HCT116 (cell line): ENCODE measurements at regions of chr16 and their contacts with region 1.

Region 1: DNA sequence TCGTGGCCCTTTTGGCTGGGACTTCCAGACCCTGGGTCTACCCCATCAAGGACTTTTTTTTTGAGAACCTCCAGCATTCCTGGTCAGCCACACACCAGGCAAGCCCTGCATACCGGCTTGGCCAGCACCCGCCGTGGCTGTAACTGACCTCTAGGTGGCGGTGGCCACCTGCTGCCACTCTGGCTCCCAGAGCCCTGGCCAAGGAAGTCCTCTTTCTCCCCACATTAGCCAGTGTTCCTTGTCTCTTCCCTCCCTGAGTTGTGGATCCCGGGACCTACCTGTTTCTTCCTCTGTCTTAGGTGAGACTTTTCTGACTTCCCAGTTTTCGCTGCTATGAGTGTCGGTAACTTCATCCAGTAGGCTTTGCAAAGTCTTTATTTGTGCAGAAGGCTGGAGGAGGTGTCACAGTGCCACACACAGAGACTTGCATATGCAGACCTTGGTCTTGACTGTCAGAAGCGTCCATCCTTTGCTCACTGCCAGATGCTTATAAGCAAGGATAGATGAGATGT is 348.3 kb downstream of the CPPED1 start:
- DNase-seq: peak; percentile 6
- ATAC-seq: peak; percentile 99
- H3K4me3 ChIP-seq: no peak overlapping the region
- H3K27ac ChIP-seq: no peak overlapping the region
- H3K4me1 ChIP-seq: no peaks in the 10 kb centered on the region
- H3K27me3 ChIP-seq: no peaks in the 10 kb centered on the region
- CTCF ChIP-seq: peak; percentile 65 to 93 (median 87); a peak in 5 of 6 replicates
- POLR2A ChIP-seq: no peak
- RAD21 ChIP-seq: peak; percentile 85

Region 2: DNA sequence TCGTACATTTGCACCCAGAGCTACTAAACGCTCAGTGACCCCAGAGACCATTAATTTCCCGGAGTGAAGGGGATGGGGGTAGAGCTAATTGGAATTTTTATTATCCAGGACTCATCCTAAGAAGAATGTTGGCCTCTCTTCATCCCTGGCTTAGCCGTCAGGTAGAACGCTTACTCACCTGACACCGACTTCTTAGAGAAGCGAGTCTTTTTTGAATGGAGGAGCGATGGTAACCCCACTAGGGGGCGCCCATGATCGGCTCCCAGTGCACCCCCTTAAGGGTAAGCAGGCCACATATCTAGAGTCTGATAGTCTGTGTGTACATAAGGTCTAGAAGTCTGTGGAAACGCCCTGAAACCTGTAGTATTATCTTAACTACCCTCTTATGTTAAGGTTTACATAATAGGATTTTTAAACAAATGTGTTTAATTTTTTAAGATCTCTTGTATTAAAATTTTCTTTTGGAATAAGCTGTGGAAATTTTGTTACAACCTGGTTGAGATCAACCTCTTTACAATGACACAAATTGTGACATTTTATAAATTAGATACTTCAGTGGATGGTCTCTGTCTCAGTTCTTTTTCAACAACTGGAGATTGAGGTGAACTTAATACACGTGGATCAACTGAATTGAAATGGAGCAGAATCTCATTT is 118.5 kb after region 1 on chr16:
- CTCF ChIA-PET with region 1: no interaction called
- POLR2A ChIA-PET with region 1: no interaction called
- RAD21 ChIA-PET with region 1: no interaction called
- intact Hi-C with region 1: loop called (anchors 5 kb)
- DNase-seq: peak; percentile 52
- ATAC-seq: peak; percentile 94
- H3K4me3 ChIP-seq: no peak overlapping the region
- H3K27ac ChIP-seq: no peak overlapping the region
- H3K4me1 ChIP-seq: 0 out of 4 replicates have a peak, but pooled peaks cover 0 to 3% of the 10 kb centered on the region in 2 experiments
- H3K27me3 ChIP-seq: no peaks in the 10 kb centered on the region
- CTCF ChIP-seq: peak; percentile 81 to 93 (median 88)
- POLR2A ChIP-seq: no peak
- RAD21 ChIP-seq: peak; percentile 94

Region 3: DNA sequence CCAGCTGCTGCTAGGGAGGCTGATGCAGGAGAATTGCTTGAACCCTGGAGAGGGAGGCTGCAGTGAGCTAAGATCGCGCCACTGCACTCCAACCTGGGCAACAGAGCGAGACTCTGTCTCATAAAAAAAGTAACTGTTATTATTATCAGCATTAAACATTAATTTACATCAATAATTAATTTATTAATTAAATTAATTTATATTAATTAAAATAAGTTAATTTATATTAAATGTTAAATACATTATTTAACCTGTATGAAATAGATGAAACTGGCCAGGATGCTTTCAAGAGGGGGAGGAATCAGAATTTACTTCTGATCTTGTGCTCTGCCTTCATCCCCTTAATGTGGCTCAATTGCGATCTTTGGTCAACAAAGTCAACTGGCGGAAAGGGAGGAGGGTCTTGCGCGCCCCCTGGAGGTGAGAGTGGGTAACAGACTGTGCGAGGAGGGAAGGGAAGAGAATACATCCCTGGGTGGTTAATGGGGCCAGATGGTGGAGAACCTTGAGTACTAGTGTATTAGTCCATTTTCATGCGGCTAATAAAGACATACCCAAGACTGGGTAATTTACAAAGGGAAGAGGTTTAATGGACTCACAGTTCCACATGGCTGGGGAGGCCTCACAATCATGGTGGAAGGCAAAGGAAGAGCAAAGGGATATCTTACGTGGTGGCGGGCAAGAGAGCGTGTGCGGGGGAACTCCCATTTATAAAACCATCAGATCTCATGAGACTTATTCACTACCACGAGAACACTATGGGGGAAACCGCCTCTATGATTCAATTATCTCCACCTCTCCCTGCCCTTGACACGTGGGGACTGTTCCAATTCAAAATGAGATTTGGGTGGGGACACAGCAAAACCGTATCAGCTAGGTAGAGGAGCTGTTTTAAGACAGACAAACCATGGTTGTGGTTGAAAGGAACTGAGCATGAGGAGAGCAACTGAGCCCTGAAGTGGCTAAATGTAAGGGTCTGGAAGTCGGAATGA is 364.1 kb after region 1 on chr16:
- CTCF ChIA-PET with region 1: no interaction called
- POLR2A ChIA-PET with region 1: no interaction called
- RAD21 ChIA-PET with region 1: no interaction called
- intact Hi-C with region 1: loop called (anchors 1 kb)
- DNase-seq: peak; percentile 50
- ATAC-seq: peak; percentile 96
- H3K4me3 ChIP-seq: no peak overlapping the region
- H3K27ac ChIP-seq: no peak overlapping the region
- H3K4me1 ChIP-seq: no peaks in the 10 kb centered on the region
- H3K27me3 ChIP-seq: no peaks in the 10 kb centered on the region; the same call in 1 of the 2 replicates
- CTCF ChIP-seq: peak; percentile 73 to 93 (median 90)
- POLR2A ChIP-seq: no peak
- RAD21 ChIP-seq: peak; percentile 86

Region 4: GRCh38 chr16:12896562-12896961 is 441.2 kb after region 1 on chr16:
- CTCF ChIA-PET with region 1: no interaction called
- POLR2A ChIA-PET with region 1: no interaction called
- RAD21 ChIA-PET with region 1: no interaction called
- intact Hi-C with region 1: loop called (anchors 10 kb)
- DNase-seq: peak; percentile 32
- ATAC-seq: peak; percentile 84
- H3K4me3 ChIP-seq: no peak overlapping the region
- H3K27ac ChIP-seq: no peak overlapping the region
- H3K4me1 ChIP-seq: peaks cover 3 to 5% of the 10 kb centered on the region in 2 experiments; a peak in 2 of 4 replicates
- H3K27me3 ChIP-seq: peaks cover 3% of the 10 kb centered on the region; the same call in 1 of the 2 replicates
- CTCF ChIP-seq: peak; percentile 41 to 74 (median 70); a peak in 5 of 6 replicates
- POLR2A ChIP-seq: no peak
- RAD21 ChIP-seq: peak; percentile 67

Region 5: DNA sequence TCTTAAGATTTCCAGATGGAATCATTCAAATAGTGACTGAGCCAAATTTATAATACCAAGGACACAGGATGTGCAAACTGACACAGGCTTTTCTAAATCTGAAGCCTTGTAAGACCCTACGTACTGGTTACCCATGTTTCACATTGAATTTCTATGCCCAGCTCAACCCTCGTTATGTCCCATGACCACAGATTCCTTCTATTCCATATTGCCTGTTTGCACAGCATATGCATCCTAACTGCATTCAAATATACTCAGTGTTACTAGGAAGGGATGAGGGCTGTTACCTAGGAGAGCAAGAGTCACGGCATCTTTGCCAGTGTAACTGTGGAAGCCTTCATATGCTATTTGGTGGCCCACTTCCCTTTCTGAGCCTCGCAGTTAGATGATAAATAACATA is 751.3 kb after region 1 on chr16:
- CTCF ChIA-PET with region 1: no interaction called
- POLR2A ChIA-PET with region 1: no interaction called
- RAD21 ChIA-PET with region 1: no interaction called
- intact Hi-C with region 1: loop called (anchors 10 kb)
- DNase-seq: no peak
- ATAC-seq: no peak
- H3K4me3 ChIP-seq: no peak overlapping the region
- H3K27ac ChIP-seq: no peak overlapping the region
- H3K4me1 ChIP-seq: no peaks in the 10 kb centered on the region
- H3K27me3 ChIP-seq: no peaks in the 10 kb centered on the region
- CTCF ChIP-seq: no peak
- POLR2A ChIP-seq: no peak
- RAD21 ChIP-seq: no peak

Region 6: GRCh38 chr16:13453938-13454553 is 998.7 kb after region 1 on chr16:
- CTCF ChIA-PET with region 1: no interaction called
- POLR2A ChIA-PET with region 1: no interaction called
- RAD21 ChIA-PET with region 1: no interaction called
- intact Hi-C with region 1: loop called (anchors 5 kb)
- DNase-seq: peak; percentile 4
- ATAC-seq: no peak
- H3K4me3 ChIP-seq: no peak overlapping the region
- H3K27ac ChIP-seq: no peak overlapping the region
- H3K4me1 ChIP-seq: no peaks in the 10 kb centered on the region
- H3K27me3 ChIP-seq: no peaks in the 10 kb centered on the region; the same call in 1 of the 2 replicates
- CTCF ChIP-seq: peak; percentile 18 to 72 (median 47); a peak in 4 of 6 replicates
- POLR2A ChIP-seq: no peak
- RAD21 ChIP-seq: peak; percentile 34

Region 7: GRCh38 chr16:13896543-13897183 is 1441.3 kb after region 1 on chr16:
- CTCF ChIA-PET with region 1: no interaction called
- POLR2A ChIA-PET with region 1: no interaction called
- RAD21 ChIA-PET with region 1: no interaction called
- intact Hi-C with region 1: loop called (anchors 10 kb)
- DNase-seq: peak; percentile 36
- ATAC-seq: peak; percentile 90
- H3K4me3 ChIP-seq: no peak overlapping the region
- H3K27ac ChIP-seq: no peak overlapping the region
- H3K4me1 ChIP-seq: no peaks in the 10 kb centered on the region
- H3K27me3 ChIP-seq: peaks cover 38% of the 10 kb centered on the region
- CTCF ChIP-seq: peak; percentile 54 to 86 (median 82); a peak in 5 of 6 replicates
- POLR2A ChIP-seq: no peak
- RAD21 ChIP-seq: peak; percentile 55